Sciatic nerve (tissue), 2 donors: ENCODE measurements at regions of chr9 and their contacts with region 1.

Region 1: GRCh38 chr9:9670454-9670853 is 942.3 kb downstream of the PTPRD start:
- DNase-seq: no peak
- ATAC-seq: no peak

Region 2: DNA sequence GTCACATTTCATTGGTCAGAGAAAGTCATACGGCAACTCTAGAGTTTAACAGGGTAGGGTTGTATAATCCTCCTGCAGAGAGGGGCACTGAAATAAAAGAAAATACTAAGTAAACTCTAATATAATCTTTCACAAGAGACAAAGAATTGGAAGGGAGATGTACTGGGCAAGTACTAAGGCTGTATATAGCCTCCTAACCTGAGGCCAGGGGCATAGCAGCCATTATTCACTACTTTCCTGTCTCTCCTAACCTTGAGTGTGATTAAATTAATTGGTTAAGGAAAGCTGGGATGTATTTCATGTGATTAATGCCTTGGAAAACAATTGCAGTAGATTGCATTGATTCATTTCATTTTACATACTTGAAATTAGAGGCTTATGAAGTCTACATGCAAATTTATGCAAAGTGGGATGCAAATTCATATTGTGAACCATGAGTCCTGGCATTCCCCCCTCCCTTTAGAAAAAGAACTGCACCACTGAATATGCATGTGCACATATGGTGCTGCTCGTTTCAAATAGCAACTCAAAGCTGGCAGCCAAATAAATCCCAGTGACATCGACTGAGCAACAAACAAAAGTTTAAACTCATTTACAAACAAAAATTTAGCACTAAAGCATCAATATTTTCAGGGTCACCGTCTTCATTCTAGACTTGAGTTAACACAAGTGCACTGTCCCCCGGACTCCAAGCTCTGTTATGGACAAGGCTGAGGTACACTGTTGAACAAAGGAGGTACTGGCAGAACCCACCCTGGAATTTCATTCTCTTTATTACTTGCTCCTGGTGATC is 1940.9 kb before region 1 on chr9:
- intact Hi-C with region 1: loop called (anchors 5 kb)
- DNase-seq: no peak
- ATAC-seq: no peak